Endothelial cell of umbilical vein (primary cell): ENCODE measurements at regions of chr22 and their contacts with region 1.

Region 1: DNA sequence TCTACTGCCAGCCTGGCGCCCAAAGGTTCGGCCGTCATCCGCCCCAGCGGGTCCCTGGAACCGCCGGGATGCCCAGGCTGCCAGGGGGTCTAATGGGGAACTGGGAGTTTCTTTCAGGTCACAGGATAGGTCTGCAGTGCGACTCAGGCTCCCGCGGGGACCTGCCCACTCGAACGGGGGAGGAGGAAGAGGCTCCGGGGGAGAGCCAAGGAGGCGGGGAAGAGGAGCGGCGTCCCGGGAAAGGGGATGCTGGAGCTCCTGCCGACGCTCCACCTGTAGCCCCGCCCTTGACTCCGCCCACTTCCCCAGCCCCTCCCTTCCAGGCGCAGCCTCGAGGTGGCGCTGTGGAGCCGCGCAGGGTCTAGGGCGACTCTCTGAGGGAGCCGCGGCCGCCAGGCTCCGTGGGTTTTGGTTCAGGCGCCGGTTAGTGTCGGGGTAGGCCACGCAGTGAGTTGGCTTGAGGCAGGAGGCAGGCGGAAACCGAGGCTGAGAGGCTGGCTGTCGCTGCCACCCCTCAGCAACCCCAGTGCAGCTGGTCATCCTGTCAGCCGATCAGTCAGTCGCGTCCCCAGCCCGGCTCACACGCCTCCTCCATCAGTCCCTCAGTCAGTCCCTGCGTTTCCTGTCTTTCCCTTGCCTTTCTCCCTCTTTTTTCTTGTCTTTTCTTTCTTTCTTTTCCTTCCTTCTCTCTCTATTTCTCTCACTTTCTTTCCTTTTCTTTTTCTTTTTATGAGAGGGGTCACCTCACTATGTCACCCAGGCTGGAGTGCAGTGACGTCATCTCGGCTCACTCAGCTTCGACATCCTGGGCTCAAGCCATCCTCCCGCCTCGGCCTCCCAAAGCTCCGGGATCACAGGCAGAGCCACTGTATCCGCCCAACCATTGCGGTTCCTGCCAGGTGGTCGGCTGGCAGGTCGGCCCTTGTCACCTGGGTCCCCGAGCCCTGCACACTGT is 26.4 kb downstream of the YWHAH start:
- DNase-seq: peak; percentile 80
- H3K4me3 ChIP-seq: peak overlapping the region in 2 of 3 experiments; percentile 9 to 31
- H3K27ac ChIP-seq: no peak overlapping the region
- H3K4me1 ChIP-seq: peaks cover 6% of the 10 kb centered on the region
- H3K27me3 ChIP-seq: no peaks in the 10 kb centered on the region
- CTCF ChIP-seq: peak; percentile 93 to 98
- POLR2A ChIP-seq: no peak

Region 2: DNA sequence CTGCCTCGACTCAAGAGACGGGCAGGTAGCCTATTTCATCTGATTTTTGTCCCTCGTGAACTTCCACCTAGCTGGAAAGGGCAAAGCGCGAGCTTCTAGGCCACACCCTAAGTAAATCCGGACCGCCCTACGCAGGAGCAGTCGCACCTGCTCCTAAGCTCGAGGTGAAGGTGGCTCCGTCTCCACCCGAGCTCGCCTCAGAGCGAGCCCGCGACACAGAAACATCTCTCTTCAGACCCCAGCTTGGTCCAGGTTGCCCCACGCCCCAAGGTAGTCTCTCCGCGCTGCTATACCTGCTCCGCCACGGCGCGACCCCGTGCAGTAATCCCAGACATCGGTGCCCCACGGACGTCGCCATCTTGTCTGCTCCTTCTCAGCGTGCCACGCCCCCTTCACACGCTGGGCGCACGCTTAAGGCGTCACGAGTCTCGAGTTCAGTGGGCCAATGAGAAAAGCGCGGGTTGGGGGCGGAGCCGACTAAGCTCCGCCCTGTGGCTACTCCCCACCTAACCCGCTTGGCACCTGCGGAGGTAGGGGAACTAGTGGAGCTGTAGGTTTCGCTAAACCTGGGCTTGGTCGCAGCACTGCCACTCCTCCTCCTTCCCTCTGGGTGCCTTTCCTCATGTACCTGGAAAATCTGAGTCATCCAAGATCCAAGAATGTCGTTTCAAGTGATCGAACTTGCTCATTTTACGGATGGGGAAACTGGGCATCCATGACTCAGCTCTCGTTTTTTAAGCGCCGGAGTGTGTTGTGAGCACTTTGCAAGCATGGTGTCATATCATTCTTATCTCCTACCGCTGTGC is 308.7 kb before region 1 on chr22 and contains the start of gene PISD:
- CTCF ChIA-PET with region 1: interaction called, 90 read pairs
- POLR2A ChIA-PET with region 1: no interaction called
- dilution Hi-C with region 1: no loop called
- intact Hi-C with region 1: loop called (anchors 1 kb)
- DNase-seq: peak; percentile 96
- H3K4me3 ChIP-seq: peak within 1 kb of the TSS; percentile 69 to 92 (median 90)
- H3K27ac ChIP-seq: peak within 1 kb of the TSS; percentile 63
- H3K4me1 ChIP-seq: peaks cover 11% of the 10 kb centered on the region
- H3K27me3 ChIP-seq: no peaks in the 10 kb centered on the region
- CTCF ChIP-seq: no peak
- POLR2A ChIP-seq: peak; percentile 68
- total RNA-seq, gene PISD: 53.2 and 58.0 TPM in 2 replicates

Region 3: DNA sequence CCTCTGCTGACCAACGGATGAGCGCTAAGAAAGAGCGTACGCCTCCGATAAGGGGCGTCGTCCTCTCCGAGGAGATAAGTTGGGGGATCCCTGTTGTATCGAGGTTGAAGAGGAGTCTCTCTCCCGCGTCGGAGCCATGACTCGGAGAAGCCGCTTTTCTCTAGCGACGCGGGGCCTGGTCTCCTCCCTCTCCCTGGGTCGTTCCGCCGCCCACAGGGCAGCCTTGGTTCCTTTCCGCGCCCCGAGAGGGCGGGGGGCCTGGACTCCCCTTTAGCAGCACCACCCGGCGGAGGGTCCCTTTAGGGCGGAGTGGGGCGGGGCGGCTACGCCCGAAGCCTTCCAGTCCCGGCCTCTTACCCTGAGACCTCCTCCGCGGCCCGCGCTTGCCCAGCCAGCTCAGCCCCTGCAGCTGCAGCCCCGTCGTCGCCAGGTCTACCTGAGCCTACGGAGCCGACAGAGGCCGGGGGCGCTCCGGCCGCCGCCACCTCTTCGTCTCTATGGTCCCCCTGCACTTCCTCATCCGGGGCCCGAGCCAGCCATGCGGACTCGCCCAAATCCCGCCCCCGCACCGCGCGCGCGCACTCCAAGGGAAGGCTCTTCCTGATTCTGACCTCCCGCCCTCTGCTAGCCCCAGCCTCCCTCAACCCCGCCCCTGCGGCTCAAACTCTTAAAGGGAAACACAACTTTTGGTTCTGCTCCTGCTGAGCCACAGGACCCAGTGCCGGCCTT is 221.0 kb before region 1 on chr22 and contains the start of gene PRR14L:
- CTCF ChIA-PET with region 1: interaction called, 3 read pairs
- POLR2A ChIA-PET with region 1: no interaction called
- dilution Hi-C with region 1: no loop called
- intact Hi-C with region 1: loop called (anchors 2 kb)
- DNase-seq: peak; percentile 96
- H3K4me3 ChIP-seq: peak within 1 kb of the TSS; percentile 75 to 89 (median 82)
- H3K27ac ChIP-seq: peak within 1 kb of the TSS; percentile 66
- H3K4me1 ChIP-seq: peaks cover 37% of the 10 kb centered on the region
- H3K27me3 ChIP-seq: no peaks in the 10 kb centered on the region
- CTCF ChIP-seq: no peak
- POLR2A ChIP-seq: peak; percentile 93
- total RNA-seq, gene PRR14L: 47.5 and 53.8 TPM in 2 replicates

Region 4: GRCh38 chr22:31829505-31829904 is 141.3 kb before region 1 on chr22:
- CTCF ChIA-PET with region 1: interaction called, 14 read pairs
- POLR2A ChIA-PET with region 1: no interaction called
- dilution Hi-C with region 1: no loop called
- intact Hi-C with region 1: no loop called
- DNase-seq: peak; percentile 73
- H3K4me3 ChIP-seq: no peak overlapping the region
- H3K27ac ChIP-seq: peak overlapping the region; percentile 59
- H3K4me1 ChIP-seq: peaks cover 15% of the 10 kb centered on the region
- H3K27me3 ChIP-seq: no peaks in the 10 kb centered on the region
- CTCF ChIP-seq: no peak
- POLR2A ChIP-seq: peak; percentile 52

Region 5: GRCh38 chr22:31943976-31944699 is 26.6 kb before region 1 on chr22 and contains the start of gene YWHAH:
- CTCF ChIA-PET with region 1: interaction called, 20 read pairs
- POLR2A ChIA-PET with region 1: no interaction called
- dilution Hi-C with region 1: no loop called
- intact Hi-C with region 1: loop called (anchors 2 kb)
- DNase-seq: peak; percentile 95
- H3K4me3 ChIP-seq: peak within 1 kb of the TSS; percentile 94 to 100 (median 96)
- H3K27ac ChIP-seq: peak within 1 kb of the TSS; percentile 74
- H3K4me1 ChIP-seq: peaks cover 24% of the 10 kb centered on the region
- H3K27me3 ChIP-seq: no peaks in the 10 kb centered on the region
- CTCF ChIP-seq: no peak
- POLR2A ChIP-seq: peak; percentile 90
- total RNA-seq, gene YWHAH: 170 and 182 TPM in 2 replicates

Region 6: GRCh38 chr22:32026396-32026795 is 55.6 kb after region 1 on chr22:
- CTCF ChIA-PET with region 1: no interaction called
- POLR2A ChIA-PET with region 1: no interaction called
- dilution Hi-C with region 1: no loop called
- intact Hi-C with region 1: no loop called
- DNase-seq: no peak
- H3K4me3 ChIP-seq: no peak overlapping the region
- H3K27ac ChIP-seq: no peak overlapping the region
- H3K4me1 ChIP-seq: no peaks in the 10 kb centered on the region
- H3K27me3 ChIP-seq: peaks cover 0 to 6% of the 10 kb centered on the region in 2 experiments
- CTCF ChIP-seq: no peak
- POLR2A ChIP-seq: no peak

Region 7: DNA sequence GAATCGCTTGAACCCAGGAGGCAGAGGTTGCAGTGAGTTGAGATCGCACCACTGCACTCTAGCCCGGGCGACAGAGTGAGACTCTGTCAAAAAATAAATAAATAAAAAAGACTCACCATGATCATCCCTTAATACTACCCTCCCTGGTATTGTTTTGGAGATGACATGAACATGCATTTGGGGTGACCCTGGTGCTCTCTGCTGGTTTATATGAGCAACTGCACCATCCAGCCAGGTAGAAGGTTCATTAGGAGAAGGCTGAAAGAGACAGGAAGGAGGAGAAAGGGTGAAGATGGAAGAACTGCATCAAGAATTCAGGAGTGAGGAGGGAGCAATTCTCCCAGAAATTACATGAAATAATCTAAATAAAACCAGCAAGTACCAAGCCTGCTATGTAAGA is 110.1 kb after region 1 on chr22:
- CTCF ChIA-PET with region 1: interaction called, 13 read pairs
- POLR2A ChIA-PET with region 1: no interaction called
- dilution Hi-C with region 1: no loop called
- intact Hi-C with region 1: no loop called
- DNase-seq: peak; percentile 11
- H3K4me3 ChIP-seq: no peak overlapping the region
- H3K27ac ChIP-seq: no peak overlapping the region
- H3K4me1 ChIP-seq: no peaks in the 10 kb centered on the region
- H3K27me3 ChIP-seq: peaks cover 0 to 5% of the 10 kb centered on the region in 2 experiments
- CTCF ChIP-seq: peak; percentile 36 to 46
- POLR2A ChIP-seq: no peak

Region 8: DNA sequence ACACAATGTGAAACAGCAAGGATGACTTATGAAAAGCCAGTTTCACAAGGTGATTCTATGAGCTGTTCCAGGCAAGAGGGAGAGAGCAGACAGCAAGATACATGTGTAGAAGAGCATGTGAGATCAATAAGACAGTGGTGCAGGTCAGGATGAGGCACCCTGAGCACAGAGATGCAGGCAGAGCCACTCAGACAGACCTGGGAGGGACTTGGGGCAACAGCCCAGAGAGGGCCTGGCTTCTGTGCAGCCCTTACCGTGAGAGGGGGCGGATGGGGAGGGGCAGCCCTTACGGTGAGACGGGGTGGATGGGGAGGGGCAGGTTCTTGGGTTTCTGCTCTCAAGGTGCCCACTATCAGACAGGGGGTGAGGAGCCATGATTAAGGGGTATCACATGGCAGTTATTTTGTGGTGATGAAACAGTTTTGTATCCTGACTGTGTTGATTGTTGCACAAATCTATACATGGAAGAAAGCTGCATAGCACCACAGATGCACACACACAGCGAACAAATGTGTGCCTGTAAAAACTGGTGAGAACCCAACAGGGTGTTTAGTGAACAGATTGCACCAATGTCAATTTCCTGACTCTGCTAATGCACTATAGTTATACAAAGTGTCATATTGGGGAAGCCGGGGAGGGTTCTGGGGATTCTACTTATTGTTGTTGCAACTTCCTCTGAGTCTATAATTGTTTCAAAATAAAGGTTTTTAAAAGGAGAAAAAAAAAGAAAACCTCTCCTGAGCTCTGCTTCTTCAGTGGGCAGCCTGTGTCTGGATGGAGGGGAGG is 193.5 kb after region 1 on chr22:
- CTCF ChIA-PET with region 1: no interaction called
- POLR2A ChIA-PET with region 1: no interaction called
- dilution Hi-C with region 1: no loop called
- intact Hi-C with region 1: no loop called
- DNase-seq: no peak
- H3K4me3 ChIP-seq: no peak overlapping the region
- H3K27ac ChIP-seq: no peak overlapping the region
- H3K4me1 ChIP-seq: no peaks in the 10 kb centered on the region
- H3K27me3 ChIP-seq: peaks cover 0 to 2% of the 10 kb centered on the region in 2 experiments
- CTCF ChIP-seq: no peak
- POLR2A ChIP-seq: no peak